Posterior cingulate gyrus (tissue), 11 donors: ENCODE measurements at regions of chr11 and their contacts with region 1.

Region 1: GRCh38 chr11:84714316-84714780 is 912.8 kb downstream of the DLG2 start:
- DNase-seq: peak in 6 of 10 donors; percentile 8 to 66 (median 26)

Region 2: GRCh38 chr11:84249344-84250136 is 464.8 kb before region 1 on chr11:
- intact Hi-C with region 1: no loop called
- DNase-seq: no peak

Region 3: GRCh38 chr11:84558085-84558905 is 156.1 kb before region 1 on chr11:
- intact Hi-C with region 1: loop called (anchors 10 kb)
- DNase-seq: peak in 6 of 10 donors; percentile 20 to 76 (median 36)

Region 4: DNA sequence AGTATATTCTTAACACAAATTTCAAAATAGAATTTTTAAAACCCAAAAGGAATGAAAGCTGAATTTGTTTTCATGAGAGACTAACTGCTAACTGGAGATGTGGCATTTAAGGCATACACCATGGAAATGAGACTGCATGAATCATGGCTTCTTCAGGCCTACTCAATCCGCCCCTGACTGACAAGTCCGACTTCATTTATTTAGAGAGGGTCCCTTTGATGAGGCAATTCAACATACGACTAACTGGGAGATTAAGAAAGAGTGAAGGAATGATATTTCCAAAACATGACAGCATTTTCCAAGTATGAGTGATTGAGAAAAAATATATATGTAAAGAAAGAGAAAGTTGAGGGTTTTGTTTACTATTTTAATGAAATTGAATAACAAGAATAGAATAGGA is 192.6 kb after region 1 on chr11:
- intact Hi-C with region 1: no loop called
- DNase-seq: no peak

Region 5: DNA sequence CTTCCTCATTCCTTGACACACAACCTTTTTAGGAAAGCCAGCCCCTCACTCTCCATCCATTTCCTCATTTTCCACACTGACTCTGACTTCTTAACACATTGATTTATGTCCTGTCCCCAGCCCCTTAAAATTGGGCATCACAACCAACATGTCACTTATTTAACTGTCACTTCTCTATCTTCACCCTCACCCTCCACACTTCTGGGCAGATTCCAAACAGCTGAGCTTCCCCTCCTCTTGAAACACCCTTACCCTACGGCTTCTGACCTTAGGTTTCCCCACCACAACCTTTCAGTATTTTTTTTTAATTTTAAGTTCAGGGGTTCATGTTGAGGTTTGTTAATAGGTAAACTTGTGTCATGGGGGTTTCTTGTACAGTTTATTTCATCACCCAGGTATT is 216.5 kb after region 1 on chr11:
- intact Hi-C with region 1: no loop called
- DNase-seq: no peak